ENCODE measurements at regions of chr15 and their contacts with region 1.

Region 1: GRCh38 chr15:51935466-51936104 is 36.0 kb downstream of the LEO1 start:
- DNase-seq: no peak
- ATAC-seq: no peak
- H3K4me3 ChIP-seq: no peak overlapping the region
- H3K27ac ChIP-seq: no peak overlapping the region
- H3K4me1 ChIP-seq: no peaks in the 10 kb centered on the region
- H3K27me3 ChIP-seq: no peaks in the 10 kb centered on the region
- CTCF ChIP-seq: no peak

Region 2: DNA sequence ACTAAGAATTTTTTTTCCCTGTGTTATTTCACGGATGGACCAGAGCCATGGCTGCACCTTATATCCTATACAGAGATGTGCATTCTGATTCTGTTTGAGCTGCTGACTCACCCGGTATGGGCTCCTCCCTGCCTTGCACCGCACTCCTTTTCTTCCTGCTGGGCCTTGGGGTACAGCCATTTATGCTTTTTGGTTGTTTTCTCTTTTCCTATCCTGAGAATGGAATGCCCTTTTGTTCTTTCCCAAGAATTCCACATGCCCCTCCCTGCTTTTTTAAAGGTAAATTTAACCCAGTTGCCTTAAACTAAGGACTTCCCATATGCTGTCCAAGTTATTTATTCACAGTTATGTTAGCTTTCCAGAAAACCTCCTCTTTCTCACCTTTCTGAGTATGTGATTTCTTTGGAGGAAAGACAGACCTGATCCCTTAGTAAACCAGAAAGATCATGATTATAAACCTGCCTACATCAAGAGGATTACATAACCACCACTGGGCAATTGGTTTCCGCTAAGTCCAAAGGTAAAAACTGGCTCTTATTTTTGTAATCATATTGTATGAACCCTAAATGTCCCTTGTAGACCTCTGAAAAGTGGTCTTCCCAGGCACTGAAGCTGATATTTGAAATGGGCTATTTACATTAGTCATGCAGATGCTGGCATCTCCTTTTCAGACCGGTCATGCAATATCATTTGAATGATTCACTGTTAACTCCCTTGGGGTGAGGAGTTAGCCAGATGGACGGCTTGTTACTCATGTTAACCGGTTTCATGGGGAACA is 60.6 kb before region 1 on chr15:
- intact Hi-C with region 1: loop called in 1 of 3 experiments (anchors 10 kb)
- DNase-seq: no peak
- ATAC-seq: peak in 3 of 4 donors; percentile 27 to 62 (median 38)
- H3K4me3 ChIP-seq: no peak overlapping the region
- H3K27ac ChIP-seq: no peak overlapping the region
- H3K4me1 ChIP-seq: peaks cover 0 to 13% (median 12%) of the 10 kb centered on the region in 3 donors
- H3K27me3 ChIP-seq: no peaks in the 10 kb centered on the region
- CTCF ChIP-seq: no peak

Region 3: DNA sequence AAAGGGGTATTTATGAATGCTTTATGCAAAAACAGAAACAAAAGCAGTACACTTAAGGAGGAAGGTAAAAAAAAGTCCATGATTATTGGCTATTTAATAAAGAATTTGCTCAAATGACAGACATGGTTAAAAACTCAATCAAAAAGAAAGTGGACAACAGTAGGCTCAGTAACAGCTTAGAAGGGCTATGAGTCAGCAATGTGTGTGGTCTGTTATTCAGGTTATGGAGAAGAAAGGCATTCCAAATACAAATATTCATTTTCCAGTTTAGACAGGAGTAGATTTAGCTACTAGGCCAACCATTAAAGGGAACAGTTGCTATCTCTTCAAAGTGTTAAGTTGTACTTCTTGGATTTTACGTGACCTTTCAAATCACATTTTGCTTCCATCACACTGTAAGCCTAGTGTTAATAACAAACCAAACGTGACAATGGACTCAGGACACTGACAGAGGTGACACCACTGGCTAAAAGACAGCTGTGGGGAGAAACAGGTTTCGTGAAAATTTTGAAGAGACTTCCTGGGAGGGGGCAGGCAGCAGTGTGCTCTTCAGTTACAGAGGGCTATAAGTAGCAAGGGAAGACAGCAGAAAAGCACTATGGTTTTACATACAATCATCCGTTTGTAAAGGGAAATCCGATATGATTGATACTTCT is 401.7 kb after region 1 on chr15:
- intact Hi-C with region 1: no loop called
- DNase-seq: no peak
- ATAC-seq: peak; percentile 48 to 72 (median 64)
- H3K4me3 ChIP-seq: no peak overlapping the region
- H3K27ac ChIP-seq: no peak overlapping the region
- H3K4me1 ChIP-seq: peaks cover 0 to 6% (median 5%) of the 10 kb centered on the region in 3 donors
- H3K27me3 ChIP-seq: no peaks in the 10 kb centered on the region
- CTCF ChIP-seq: no peak